ENCODE measurements at regions of chr2 and their contacts with region 1.

Region 1: DNA sequence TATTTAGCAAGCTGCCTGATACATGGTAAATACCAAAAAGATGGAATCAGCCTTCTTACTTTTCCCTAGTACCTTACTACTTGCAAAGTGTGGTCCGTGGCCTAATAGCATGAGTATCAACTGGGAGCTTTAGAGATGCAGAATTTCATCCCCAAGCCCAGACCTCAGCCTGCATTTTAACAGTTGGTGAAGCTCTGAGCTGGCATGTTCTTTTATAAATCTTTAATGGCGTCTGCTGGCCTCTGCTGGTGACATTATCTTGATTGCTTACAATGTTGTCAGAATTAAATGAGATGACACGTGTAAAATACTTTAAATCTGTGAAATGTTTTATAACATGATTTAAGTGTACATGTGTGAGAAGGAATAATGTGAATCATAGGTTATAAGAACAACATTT is 115.1 kb upstream of the NOSTRIN start:
- DNase-seq: no peak
- ATAC-seq: peak; percentile 57

Region 2: DNA sequence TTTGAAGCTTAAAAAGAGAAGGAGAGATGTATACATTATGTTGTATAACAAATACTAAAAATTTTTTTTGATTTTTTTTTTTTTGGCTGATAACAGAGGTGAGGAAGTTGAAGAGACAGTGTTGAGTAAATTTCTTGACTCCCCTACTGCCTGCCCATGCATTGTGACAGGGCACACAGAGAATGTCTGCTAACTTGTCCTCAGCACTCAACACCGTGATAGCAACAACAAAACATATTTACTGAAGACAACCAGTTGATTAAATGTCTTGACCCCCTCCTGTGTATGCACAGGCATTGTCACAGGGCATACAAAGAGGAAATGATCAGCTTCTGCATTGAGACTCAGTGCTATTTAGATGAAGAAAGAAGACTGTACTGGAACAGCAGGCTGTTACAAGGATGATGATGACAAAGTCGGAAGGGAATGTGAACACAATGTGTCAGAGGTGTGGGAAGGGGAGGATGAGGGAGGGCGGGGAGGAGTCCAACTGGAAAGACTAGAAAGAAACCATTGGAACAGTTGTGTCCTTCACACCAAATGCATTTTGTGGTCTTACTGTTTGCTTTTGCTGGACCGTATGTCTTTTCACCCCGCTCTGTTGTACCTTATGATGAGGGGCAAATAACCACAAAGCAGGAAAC is 141.8 kb before region 1 on chr2:
- intact Hi-C with region 1: loop called (anchors 10 kb)
- DNase-seq: no peak
- ATAC-seq: peak; percentile 91